PC-3 (cell line): ENCODE measurements at regions of chr12 and their contacts with region 1.

Region 1: GRCh38 chr12:89529738-89530137 is 3.9 kb upstream of the POC1B start:
- DNase-seq: peak; percentile 74
- ATAC-seq: 0 out of 2 replicates have a peak, but pooled peaks have one; percentile 14
- H3K4me3 ChIP-seq: no peak overlapping the region
- H3K27ac ChIP-seq: no peak overlapping the region
- H3K4me1 ChIP-seq: 0 out of 2 replicates have a peak, but pooled peaks cover 7% of the 10 kb centered on the region
- H3K27me3 ChIP-seq: no peaks in the 10 kb centered on the region
- CTCF ChIP-seq: peak; percentile 86

Region 2: DNA sequence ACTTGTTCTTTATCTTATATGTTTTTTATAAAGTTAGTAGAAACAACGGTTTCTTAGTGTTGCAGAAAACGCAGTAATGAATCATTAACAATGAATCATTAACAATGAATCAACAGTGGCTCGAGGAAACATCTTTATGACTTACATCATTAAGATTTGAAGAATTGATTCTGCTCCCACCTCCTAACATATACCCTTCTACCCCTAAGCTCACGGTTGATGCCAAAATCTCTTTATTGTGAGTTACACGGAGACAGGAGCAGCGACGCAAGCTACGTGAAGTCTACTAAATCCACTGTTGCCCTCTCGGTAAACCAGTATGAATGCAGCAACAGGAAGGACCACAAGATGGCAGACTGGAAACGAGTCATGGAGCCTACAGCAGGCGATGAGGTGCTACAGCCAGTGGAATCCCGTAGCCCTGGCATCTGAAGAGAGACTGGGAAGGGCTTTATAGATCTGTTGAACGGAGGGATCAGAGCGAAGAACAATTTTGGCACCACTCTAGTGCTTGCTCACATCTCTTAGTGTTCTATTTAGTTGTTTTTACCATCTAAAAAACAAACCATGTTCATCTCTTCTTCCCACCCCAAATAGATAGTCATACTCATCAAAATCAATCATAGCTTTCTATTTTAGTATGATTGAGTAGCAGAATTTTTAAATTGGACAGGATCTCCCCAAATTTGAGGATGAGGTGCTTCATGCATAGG is 510.2 kb before region 1 on chr12:
- CTCF ChIA-PET with region 1: no interaction called
- POLR2A ChIA-PET with region 1: no interaction called
- intact Hi-C with region 1: loop called (anchors 1 kb)
- DNase-seq: peak; percentile 89
- ATAC-seq: peak; percentile 89
- H3K4me3 ChIP-seq: peak overlapping the region; percentile 64
- H3K27ac ChIP-seq: peak overlapping the region; percentile 12; the same call in 1 of the 2 replicates
- H3K4me1 ChIP-seq: peaks cover 17% of the 10 kb centered on the region
- H3K27me3 ChIP-seq: no peaks in the 10 kb centered on the region
- CTCF ChIP-seq: peak; percentile 99

Region 3: GRCh38 chr12:89470741-89471509 is 58.8 kb before region 1 on chr12:
- CTCF ChIA-PET with region 1: no interaction called
- POLR2A ChIA-PET with region 1: interaction called, 3 read pairs
- intact Hi-C with region 1: loop called (anchors 1 kb)
- DNase-seq: peak; percentile 80
- ATAC-seq: peak; percentile 43
- H3K4me3 ChIP-seq: no peak overlapping the region
- H3K27ac ChIP-seq: peak overlapping the region; percentile 38
- H3K4me1 ChIP-seq: peaks cover 55% of the 10 kb centered on the region
- H3K27me3 ChIP-seq: no peaks in the 10 kb centered on the region
- CTCF ChIP-seq: peak; percentile 86

Region 4: GRCh38 chr12:90343966-90344365 is 814.2 kb after region 1 on chr12:
- CTCF ChIA-PET with region 1: no interaction called
- POLR2A ChIA-PET with region 1: no interaction called
- intact Hi-C with region 1: no loop called
- DNase-seq: no peak
- ATAC-seq: no peak
- H3K4me3 ChIP-seq: no peak overlapping the region
- H3K27ac ChIP-seq: no peak overlapping the region
- H3K4me1 ChIP-seq: no peaks in the 10 kb centered on the region
- H3K27me3 ChIP-seq: no peaks in the 10 kb centered on the region
- CTCF ChIP-seq: no peak